Right ventricle myocardium inferior (tissue), 1 donor: ENCODE measurements at regions of chr10 and their contacts with region 1.

Region 1: DNA sequence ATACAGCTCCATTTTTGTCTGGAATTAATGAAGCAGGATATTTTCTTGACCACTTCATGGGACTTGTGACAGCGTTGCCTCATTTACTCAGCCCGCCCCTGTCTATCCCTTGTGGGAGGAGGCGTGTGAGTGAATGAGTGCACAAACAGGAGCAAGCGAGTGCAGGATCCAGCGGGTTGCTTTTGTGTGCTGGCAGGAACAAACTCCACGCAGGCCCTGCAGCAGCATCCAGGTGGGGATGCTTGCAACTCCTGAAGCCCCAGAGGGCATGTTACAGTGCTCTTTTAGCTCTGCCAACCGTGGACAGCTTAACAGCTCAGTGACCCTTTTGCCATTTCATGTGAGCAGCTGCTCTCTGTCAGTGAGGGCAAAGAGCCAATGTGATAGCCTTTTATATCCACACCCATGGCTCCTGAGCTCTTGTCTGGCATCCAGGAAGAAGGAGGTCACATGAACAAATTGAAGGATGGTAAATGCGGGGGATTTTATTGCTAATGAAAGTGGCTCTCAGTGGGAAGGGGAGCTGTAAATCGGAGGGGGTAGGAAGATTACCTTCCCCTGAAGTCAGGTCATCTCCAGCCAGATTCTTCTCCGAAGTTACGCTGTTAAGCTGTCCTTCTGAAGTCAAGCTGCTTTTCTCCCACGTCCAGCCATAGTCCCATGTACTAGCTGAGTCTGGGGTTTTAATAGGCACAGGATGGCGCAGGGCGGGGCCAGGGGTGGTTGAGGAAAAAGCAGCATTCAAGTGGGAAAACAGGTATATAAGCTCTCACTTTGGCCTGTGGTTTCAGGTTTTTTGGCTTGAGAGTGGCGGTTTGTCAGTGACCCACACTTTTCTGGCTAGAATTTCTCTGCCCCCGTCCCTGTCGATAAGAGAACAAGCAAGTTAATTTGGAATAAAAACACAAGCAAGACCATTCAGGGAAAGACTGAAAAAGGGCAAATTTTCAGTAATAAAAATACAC is 714.7 kb upstream of the MBL2 start:
- DNase-seq: no peak
- ATAC-seq: peak; percentile 90

Region 2: GRCh38 chr10:52818019-52818418 is 669.3 kb before region 1 on chr10:
- intact Hi-C with region 1: loop called (anchors 5 kb)
- DNase-seq: no peak
- ATAC-seq: peak; percentile 37

Region 3: GRCh38 chr10:53253221-53253620 is 234.1 kb before region 1 on chr10:
- intact Hi-C with region 1: no loop called
- DNase-seq: no peak
- ATAC-seq: no peak

Region 4: DNA sequence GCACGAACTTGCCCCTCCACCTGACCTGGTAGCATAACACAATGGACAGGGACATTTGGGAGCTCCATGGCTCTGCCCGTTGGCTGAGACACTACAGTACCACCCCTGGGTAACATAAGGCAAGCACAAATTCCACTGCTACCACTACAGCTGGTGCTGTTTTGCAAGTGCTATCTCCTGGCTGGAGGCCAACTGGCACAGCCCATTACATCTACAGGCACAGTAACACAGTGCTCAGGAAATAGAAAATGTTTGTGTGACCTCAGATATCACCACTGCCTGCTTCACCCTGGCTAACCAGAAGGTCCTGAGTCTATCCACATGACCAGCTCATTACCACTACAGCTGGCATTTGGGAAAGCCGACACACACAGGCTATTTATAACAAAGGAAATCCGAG is 83.6 kb before region 1 on chr10:
- intact Hi-C with region 1: loop called (anchors 5 kb)
- DNase-seq: peak; percentile 89
- ATAC-seq: peak; percentile 99

Region 5: GRCh38 chr10:53434413-53434812 is 52.9 kb before region 1 on chr10:
- intact Hi-C with region 1: no loop called
- DNase-seq: no peak
- ATAC-seq: no peak